Activated CD4-positive, alpha-beta T cell treated with anti-CD3 and anti-CD28 coated beads for 36 hours (primary cell): ENCODE measurements at regions of chr10 and their contacts with region 1.

Region 1: GRCh38 chr10:88791924-88792323 is 10.6 kb upstream of the LIPM start:
- DNase-seq: peak; percentile 26
- ATAC-seq: no peak
- H3K4me3 Mint-ChIP-seq: no peak overlapping the region
- H3K27ac Mint-ChIP-seq: no peak overlapping the region
- H3K4me1 Mint-ChIP-seq: peaks cover 22% of the 10 kb centered on the region
- H3K27me3 Mint-ChIP-seq: peaks cover 7% of the 10 kb centered on the region

Region 2: GRCh38 chr10:87761892-87762291 is 1030.0 kb before region 1 on chr10:
- CTCF ChIA-PET with region 1: no interaction called
- POLR2A ChIA-PET with region 1: no interaction called
- intact Hi-C with region 1: loop called in 1 of 2 experiments (anchors 5 kb)
- DNase-seq: peak; percentile 78
- ATAC-seq: peak; percentile 96
- H3K4me3 Mint-ChIP-seq: no peak overlapping the region
- H3K27ac Mint-ChIP-seq: peak overlapping the region; percentile 78
- H3K4me1 Mint-ChIP-seq: peaks cover 44% of the 10 kb centered on the region
- H3K27me3 Mint-ChIP-seq: no peaks in the 10 kb centered on the region

Region 3: GRCh38 chr10:88565072-88565471 is 226.9 kb before region 1 on chr10:
- CTCF ChIA-PET with region 1: no interaction called
- POLR2A ChIA-PET with region 1: no interaction called
- intact Hi-C with region 1: no loop called
- DNase-seq: no peak
- ATAC-seq: peak; percentile 47
- H3K4me3 Mint-ChIP-seq: no peak overlapping the region
- H3K27ac Mint-ChIP-seq: no peak overlapping the region
- H3K4me1 Mint-ChIP-seq: no peaks in the 10 kb centered on the region
- H3K27me3 Mint-ChIP-seq: no peaks in the 10 kb centered on the region

Region 4: DNA sequence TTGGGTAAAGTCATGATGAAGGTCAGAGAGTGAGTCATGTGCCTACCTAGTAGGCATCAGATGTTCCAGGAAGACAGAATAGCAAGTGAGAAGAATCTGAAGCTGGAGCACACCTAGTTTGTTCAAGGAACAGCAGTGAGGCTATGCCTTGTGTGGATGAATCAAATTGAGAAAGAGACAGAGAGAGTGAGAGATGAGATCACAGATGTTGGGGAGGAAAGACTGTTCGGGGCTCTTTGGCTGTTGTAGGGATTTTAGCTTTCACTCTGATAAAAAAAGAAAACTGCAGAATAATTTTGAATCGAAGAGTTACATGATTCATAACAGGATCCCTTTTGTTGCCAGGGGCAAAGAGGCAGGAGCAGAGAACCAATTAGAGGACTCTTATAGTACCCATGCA is 121.4 kb before region 1 on chr10:
- CTCF ChIA-PET with region 1: interaction called, 3 read pairs
- POLR2A ChIA-PET with region 1: no interaction called
- intact Hi-C with region 1: loop called in 1 of 2 experiments (anchors 1 kb)
- DNase-seq: peak; percentile 40
- ATAC-seq: peak; percentile 99
- H3K4me3 Mint-ChIP-seq: no peak overlapping the region
- H3K27ac Mint-ChIP-seq: peak overlapping the region; percentile 11
- H3K4me1 Mint-ChIP-seq: peaks cover 25% of the 10 kb centered on the region
- H3K27me3 Mint-ChIP-seq: peaks cover 18% of the 10 kb centered on the region

Region 5: DNA sequence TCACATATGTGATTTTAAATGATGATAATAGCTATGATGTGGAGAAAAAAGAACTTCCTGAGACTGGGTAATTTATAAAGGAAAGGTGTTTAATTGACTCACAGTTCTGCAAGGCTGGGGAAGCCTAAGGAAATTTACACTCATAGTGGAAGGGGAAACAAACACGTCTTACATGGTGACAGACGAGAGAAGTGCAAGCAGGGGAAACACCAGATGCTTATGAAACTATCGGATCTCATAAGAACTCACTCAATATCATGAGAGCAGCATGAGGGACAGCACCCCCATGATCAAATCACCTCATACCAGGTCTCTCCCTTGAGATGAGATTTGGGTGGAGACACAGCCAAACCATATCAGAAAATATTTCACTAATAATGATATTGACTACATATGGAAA is 36.2 kb before region 1 on chr10:
- CTCF ChIA-PET with region 1: no interaction called
- POLR2A ChIA-PET with region 1: no interaction called
- intact Hi-C with region 1: loop called in 1 of 2 experiments (anchors 1 kb)
- DNase-seq: peak; percentile 42
- ATAC-seq: peak; percentile 100
- H3K4me3 Mint-ChIP-seq: no peak overlapping the region
- H3K27ac Mint-ChIP-seq: no peak overlapping the region
- H3K4me1 Mint-ChIP-seq: peaks cover 10% of the 10 kb centered on the region
- H3K27me3 Mint-ChIP-seq: peaks cover 6% of the 10 kb centered on the region

Region 6: GRCh38 chr10:88781206-88781605 is 10.7 kb before region 1 on chr10:
- CTCF ChIA-PET with region 1: no interaction called
- POLR2A ChIA-PET with region 1: no interaction called
- intact Hi-C with region 1: no loop called
- DNase-seq: no peak
- ATAC-seq: no peak
- H3K4me3 Mint-ChIP-seq: no peak overlapping the region
- H3K27ac Mint-ChIP-seq: no peak overlapping the region
- H3K4me1 Mint-ChIP-seq: no peaks in the 10 kb centered on the region
- H3K27me3 Mint-ChIP-seq: peaks cover 5% of the 10 kb centered on the region

Region 7: DNA sequence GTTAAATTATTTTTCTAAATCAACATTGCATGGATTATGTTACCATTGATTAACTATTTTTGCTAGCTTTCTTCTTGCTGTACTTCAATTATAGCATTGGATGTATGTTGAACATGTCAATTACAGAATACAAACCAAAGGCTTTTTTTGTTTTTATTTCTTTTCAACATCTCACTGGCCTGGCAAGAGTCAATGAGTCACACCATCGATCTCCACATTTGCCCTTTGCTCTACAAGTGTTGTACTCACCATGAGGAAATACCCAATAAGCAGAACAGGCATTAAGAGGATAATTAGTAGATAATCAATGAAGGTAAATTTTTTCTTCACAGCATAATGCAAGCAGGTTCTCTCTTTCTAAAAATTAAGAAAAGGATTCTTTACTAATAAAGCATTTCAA is 36.4 kb after region 1 on chr10:
- CTCF ChIA-PET with region 1: no interaction called
- POLR2A ChIA-PET with region 1: interaction called, 6 read pairs
- intact Hi-C with region 1: loop called (anchors 1 to 5 kb)
- DNase-seq: no peak
- ATAC-seq: no peak
- H3K4me3 Mint-ChIP-seq: no peak overlapping the region
- H3K27ac Mint-ChIP-seq: no peak overlapping the region
- H3K4me1 Mint-ChIP-seq: peaks cover 64% of the 10 kb centered on the region
- H3K27me3 Mint-ChIP-seq: no peaks in the 10 kb centered on the region